Activated CD4-positive, alpha-beta T cell treated with anti-CD3 and anti-CD28 coated beads for 36 hours (primary cell): ENCODE measurements at regions of chrX and their contacts with region 1.

Region 1: DNA sequence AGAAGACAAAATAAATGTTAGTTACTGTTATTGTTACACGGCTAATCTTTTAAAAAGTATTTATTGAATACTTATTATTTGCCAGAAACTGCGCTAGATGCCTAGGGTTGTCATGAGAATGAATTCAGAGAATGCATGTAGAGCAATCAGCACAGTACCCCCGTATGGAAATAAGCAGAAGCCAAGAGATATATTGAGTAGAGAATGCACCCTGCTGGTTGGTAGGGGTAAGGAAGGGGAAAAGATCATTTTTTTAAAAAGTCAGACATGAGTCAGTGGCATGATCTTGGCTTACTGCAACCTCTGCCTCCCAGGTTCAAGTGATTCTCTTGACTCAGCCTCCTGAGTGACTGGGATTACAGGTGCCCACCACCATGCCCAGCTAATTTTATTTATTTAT is 13.1 kb upstream of the DRP2 start:
- DNase-seq: peak; percentile 12
- ATAC-seq: peak; percentile 83
- H3K4me3 Mint-ChIP-seq: no peak overlapping the region
- H3K27ac Mint-ChIP-seq: no peak overlapping the region
- H3K4me1 Mint-ChIP-seq: peaks cover 16% of the 10 kb centered on the region
- H3K27me3 Mint-ChIP-seq: no peaks in the 10 kb centered on the region

Region 2: DNA sequence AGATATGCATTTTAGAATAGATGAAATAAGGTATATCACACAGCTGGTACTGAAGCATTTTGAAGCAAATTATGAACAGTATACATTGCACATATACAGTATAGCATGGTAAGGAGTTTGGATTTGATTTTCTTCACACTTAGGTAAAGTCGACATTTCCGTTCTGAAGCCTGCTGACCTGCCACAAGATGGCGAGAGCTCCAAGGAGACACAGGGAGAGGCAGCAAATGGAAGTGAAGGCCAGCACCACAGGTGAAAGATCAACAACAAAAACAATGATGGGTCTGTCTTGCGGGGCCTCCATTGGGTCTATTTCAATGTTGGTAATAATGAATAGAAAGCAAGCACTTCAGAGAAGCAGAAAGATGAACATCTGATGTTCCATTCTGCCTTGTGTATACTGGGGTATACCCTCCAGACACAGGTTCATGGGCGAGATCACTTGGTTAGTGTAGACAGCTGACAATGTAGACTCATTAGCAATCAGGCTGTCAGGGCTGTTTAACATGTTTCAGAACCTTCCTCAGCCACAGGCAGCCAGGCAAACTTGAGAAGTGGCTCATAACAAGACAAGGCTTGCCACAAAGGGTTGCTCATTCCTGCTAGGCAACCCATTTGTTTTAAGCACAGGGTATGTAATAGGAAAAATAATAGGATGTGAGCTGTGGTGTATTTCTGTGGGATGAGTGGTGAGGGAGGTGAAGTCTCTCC is 311.0 kb before region 1 on chrX:
- CTCF ChIA-PET with region 1: no interaction called
- POLR2A ChIA-PET with region 1: no interaction called
- intact Hi-C with region 1: loop called (anchors 2 to 5 kb)
- DNase-seq: peak; percentile 52
- ATAC-seq: peak; percentile 51
- H3K4me3 Mint-ChIP-seq: no peak overlapping the region
- H3K27ac Mint-ChIP-seq: no peak overlapping the region
- H3K4me1 Mint-ChIP-seq: no peaks in the 10 kb centered on the region
- H3K27me3 Mint-ChIP-seq: no peaks in the 10 kb centered on the region

Region 3: DNA sequence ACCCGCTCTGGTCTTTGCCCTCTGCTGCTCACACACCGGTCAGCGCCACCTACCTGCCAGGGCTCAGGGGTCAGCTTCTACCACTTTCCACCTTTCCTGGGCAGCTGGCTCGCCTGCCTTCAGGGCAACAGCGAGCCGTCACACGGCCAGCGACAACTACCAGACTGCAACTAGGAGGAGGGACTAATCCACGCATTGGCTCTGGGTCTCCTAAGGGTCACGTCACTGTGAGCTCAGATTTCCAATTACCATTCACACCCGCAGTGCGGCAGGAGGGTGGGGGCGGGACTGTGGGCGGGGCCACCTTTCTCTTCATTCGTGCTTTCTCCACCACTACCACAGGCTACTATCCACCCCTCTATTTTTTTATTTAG is 949.3 kb after region 1 on chrX and contains the start of gene BEX5:
- CTCF ChIA-PET with region 1: no interaction called
- POLR2A ChIA-PET with region 1: no interaction called
- intact Hi-C with region 1: no loop called
- DNase-seq: peak; percentile 75
- ATAC-seq: peak; percentile 97
- H3K4me3 Mint-ChIP-seq: peak within 1 kb of the TSS; percentile 85
- H3K27ac Mint-ChIP-seq: peak within 1 kb of the TSS; percentile 90
- H3K4me1 Mint-ChIP-seq: peaks cover 11% of the 10 kb centered on the region
- H3K27me3 Mint-ChIP-seq: peaks cover 5% of the 10 kb centered on the region
- total RNA-seq, gene BEX5: 2.1 to 2.3 TPM